Spleen (tissue), 13 donors: ENCODE measurements at regions of chr17 and their contacts with region 1.

Region 1: DNA sequence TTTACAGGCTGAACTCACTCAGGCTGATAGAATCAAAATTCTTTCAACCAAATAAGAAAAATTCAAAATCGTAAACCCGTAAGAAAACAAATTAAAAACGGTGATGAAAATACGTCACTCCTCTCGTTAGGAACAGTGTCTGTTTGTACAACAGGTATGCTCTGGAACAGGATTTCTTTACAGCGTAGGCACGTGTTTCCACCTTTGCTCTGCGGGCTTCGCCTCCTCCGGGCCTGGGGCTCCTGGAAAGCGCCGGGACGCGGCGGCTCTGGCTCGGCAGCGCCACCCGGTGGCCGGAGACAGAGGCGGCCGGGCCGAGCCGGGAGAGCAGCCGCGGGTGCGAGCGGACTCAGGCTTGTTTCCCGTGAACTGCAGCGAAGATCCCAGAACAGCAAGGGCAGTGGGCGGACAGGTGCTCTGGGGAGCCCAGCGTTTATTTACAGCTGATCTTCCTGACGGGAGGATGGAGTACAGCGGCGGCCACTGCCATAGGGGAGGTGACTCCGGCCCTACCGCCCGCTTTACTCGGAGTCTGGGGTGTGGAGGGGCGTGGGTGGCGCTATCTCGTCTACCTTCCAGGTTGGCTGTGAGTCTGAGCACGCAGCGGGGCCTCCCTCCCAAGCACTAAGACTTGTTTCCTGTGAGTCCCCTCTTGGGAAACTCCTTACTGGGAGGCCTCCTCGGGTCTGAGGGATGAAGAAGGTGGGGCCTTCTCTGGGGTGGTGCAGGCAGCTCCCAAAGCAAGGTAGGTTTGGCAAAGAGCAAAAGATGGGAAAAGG is 40.5 kb upstream of the ATP2A3 start:
- DNase-seq: peak; percentile 93
- H3K4me3 ChIP-seq: no peak overlapping the region
- H3K27ac ChIP-seq: peak overlapping the region in 2 of 8 donors; percentile 11 to 30
- H3K4me1 ChIP-seq: peaks cover 10 to 65% (median 26%) of the 10 kb centered on the region in 6 donors
- H3K27me3 ChIP-seq: no peaks in the 10 kb centered on the region
- CTCF ChIP-seq: peak; percentile 89 to 99 (median 96)
- POLR2A ChIP-seq: no peak

Region 2: GRCh38 chr17:3865176-3865575 is 139.5 kb before region 1 on chr17:
- intact Hi-C with region 1: loop called (anchors 10 kb)
- DNase-seq: no peak
- H3K4me3 ChIP-seq: no peak overlapping the region
- H3K27ac ChIP-seq: no peak overlapping the region
- H3K4me1 ChIP-seq: peaks cover 0 to 10% (median 0%) of the 10 kb centered on the region in 6 donors
- H3K27me3 ChIP-seq: no peaks in the 10 kb centered on the region
- CTCF ChIP-seq: no peak
- POLR2A ChIP-seq: no peak

Region 3: GRCh38 chr17:3913531-3914311 is 91.0 kb before region 1 on chr17:
- intact Hi-C with region 1: loop called (anchors 5 kb)
- DNase-seq: peak; percentile 96
- H3K4me3 ChIP-seq: peak overlapping the region in 5 of 8 donors; percentile 10 to 69 (median 40)
- H3K27ac ChIP-seq: peak overlapping the region; percentile 70 to 96 (median 86)
- H3K4me1 ChIP-seq: peaks cover 34 to 82% (median 74%) of the 10 kb centered on the region in 6 donors
- H3K27me3 ChIP-seq: no peaks in the 10 kb centered on the region
- CTCF ChIP-seq: peak; percentile 97 to 99 (median 98)
- POLR2A ChIP-seq: peak in 1 of 3 donors; percentile 35